AG04449 (cell line): ENCODE measurements at regions of chr18 and their contacts with region 1.

Region 1: GRCh38 chr18:13216092-13216582 is 2.4 kb upstream of the LDLRAD4 start:
- DNase-seq: peak; percentile 19
- H3K4me3 ChIP-seq: no peak overlapping the region
- CTCF ChIP-seq: peak; percentile 80

Region 2: GRCh38 chr18:13520306-13520705 is 304.2 kb after region 1 on chr18:
- CTCF ChIA-PET with region 1: interaction called, 14 read pairs
- POLR2A ChIA-PET with region 1: no interaction called
- DNase-seq: no peak
- H3K4me3 ChIP-seq: no peak overlapping the region
- CTCF ChIP-seq: no peak

Region 3: DNA sequence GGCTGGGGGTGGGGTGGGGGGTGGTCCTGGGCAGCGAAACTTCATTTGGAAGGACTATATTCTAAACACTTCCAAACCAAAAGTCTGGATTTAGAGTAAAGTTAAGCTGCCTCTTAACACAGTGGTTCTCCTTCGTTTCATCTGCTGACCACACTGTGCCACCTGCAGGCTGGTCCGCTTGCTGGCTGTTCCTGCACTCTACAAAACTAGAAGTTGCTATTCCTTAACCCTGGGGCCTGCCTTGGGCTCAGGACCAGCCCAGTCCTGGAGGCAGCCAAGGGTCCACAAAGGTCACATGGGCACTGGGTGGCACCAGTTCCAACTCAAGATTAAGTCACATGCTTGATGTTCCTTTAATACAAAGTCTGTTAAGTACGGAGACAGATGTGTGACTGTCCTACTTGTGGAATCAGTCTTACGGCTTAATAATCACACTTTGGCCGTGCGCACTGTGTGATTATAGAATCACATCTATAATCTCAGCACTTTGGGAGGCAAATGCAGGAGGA is 314.8 kb after region 1 on chr18:
- CTCF ChIA-PET with region 1: interaction called, 95 read pairs
- POLR2A ChIA-PET with region 1: no interaction called
- DNase-seq: peak; percentile 10
- H3K4me3 ChIP-seq: no peak overlapping the region
- CTCF ChIP-seq: peak; percentile 70